Psoas muscle (tissue), 8 donors: ENCODE measurements at regions of chr15 and their contacts with region 1.

Region 1: DNA sequence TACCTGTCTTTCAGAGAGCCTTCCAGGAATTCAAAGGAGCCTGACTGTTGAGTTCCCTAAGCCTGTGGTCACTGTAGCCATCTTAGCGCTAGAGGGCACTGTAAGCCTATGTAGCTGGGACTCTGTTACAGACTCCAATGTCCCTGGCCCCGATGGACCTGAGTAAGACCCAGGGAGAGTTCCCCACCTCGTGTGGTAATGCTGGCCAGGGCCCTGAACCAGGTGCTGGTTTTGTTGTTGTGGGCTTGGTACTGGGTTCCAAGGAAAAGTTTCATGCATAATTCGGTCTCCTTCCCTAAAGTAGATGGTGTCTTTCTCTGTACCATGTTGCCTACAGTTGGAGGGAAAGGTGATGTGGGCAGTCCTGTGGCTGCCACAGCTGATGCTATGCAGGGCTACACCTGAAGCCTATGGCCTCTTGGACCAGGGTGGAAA is 32.4 kb downstream of the CDAN1 start:
- DNase-seq: peak in 1 of 2 donors; percentile 44
- ATAC-seq: peak; percentile 90 to 99 (median 96)
- H3K4me3 ChIP-seq: no peak overlapping the region
- H3K27ac ChIP-seq: no peak overlapping the region
- H3K4me1 ChIP-seq: no peaks in the 10 kb centered on the region
- H3K27me3 ChIP-seq: no peaks in the 10 kb centered on the region
- CTCF ChIP-seq: peak; percentile 85

Region 2: GRCh38 chr15:43204016-43204901 is 499.8 kb after region 1 on chr15:
- intact Hi-C with region 1: loop called in 1 of 2 experiments (anchors 10 kb)
- DNase-seq: peak; percentile 44 to 75
- ATAC-seq: peak; percentile 74 to 92 (median 80)
- H3K4me3 ChIP-seq: no peak overlapping the region
- H3K27ac ChIP-seq: no peak overlapping the region
- H3K4me1 ChIP-seq: no peaks in the 10 kb centered on the region
- H3K27me3 ChIP-seq: peaks cover 0 to 2% (median 0%) of the 10 kb centered on the region in 3 donors
- CTCF ChIP-seq: peak; percentile 59